Activated CD4-positive, alpha-beta T cell treated with anti-CD3 and anti-CD28 coated beads for 36 hours (primary cell): ENCODE measurements at regions of chr12 and their contacts with region 1.

Region 1: GRCh38 chr12:132144115-132144812 is at the starts of genes DDX51 and NOC4L:
- DNase-seq: peak; percentile 97
- ATAC-seq: peak; percentile 94
- H3K4me3 Mint-ChIP-seq: peak within 1 kb of the TSS; percentile 88
- H3K27ac Mint-ChIP-seq: peak within 1 kb of the TSS; percentile 86
- H3K4me1 Mint-ChIP-seq: peaks cover 32% of the 10 kb centered on the region
- H3K27me3 Mint-ChIP-seq: no peaks in the 10 kb centered on the region
- total RNA-seq, gene DDX51: 19.2 to 31.4 TPM
- total RNA-seq, gene NOC4L: 30.5 to 35.7 TPM

Region 2: GRCh38 chr12:131894313-131894860 is 249.9 kb before region 1 on chr12 and contains the start of gene ULK1:
- CTCF ChIA-PET with region 1: no interaction called
- POLR2A ChIA-PET with region 1: no interaction called
- intact Hi-C with region 1: loop called in 1 of 2 experiments (anchors 1 kb)
- DNase-seq: peak; percentile 96
- ATAC-seq: peak; percentile 86
- H3K4me3 Mint-ChIP-seq: peak within 1 kb of the TSS; percentile 78
- H3K27ac Mint-ChIP-seq: peak within 1 kb of the TSS; percentile 55
- H3K4me1 Mint-ChIP-seq: peaks cover 12% of the 10 kb centered on the region
- H3K27me3 Mint-ChIP-seq: no peaks in the 10 kb centered on the region
- total RNA-seq, gene ULK1: 12.9 to 14.4 TPM

Region 3: DNA sequence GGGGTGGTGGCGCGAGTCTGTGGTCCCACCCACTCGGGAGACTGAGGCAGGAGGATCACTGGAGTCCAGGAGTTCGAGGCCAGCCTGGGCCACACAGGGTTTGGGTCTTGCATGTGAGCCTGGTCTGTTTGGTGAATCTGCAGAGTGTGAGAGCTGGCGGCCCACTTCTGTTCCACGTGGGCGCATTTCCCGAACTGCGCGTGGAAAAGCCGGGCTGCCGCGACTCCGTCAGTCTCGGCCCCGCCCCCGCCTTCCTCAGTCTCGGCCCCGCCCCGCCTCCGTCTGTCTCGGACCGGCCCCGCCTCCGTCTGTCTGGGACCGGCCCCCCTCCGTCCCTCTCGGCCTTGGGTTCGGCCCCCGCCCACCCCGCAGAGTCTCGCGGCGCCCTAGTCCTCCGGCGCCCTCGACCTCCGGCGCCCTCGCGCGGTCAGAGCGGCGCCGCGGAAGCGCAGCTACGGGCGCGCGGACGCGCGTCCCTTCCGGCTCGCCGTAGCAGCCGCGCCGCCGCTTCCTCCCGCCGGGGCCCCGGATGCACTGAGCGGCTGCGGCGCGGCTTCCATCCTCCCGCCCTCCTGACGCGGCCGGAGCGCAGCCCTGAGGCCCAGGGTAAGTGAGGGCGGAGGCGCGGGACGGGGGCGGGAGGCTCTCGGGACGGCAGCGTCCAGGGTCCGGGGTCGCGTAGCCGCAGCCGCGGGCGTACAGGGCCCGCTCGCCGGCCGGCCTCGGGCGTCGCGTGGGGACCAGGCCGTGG is 194.7 kb before region 1 on chr12 and contains the start of gene EP400:
- CTCF ChIA-PET with region 1: no interaction called
- POLR2A ChIA-PET with region 1: no interaction called
- intact Hi-C with region 1: loop called in 1 of 2 experiments (anchors 1 kb)
- DNase-seq: peak; percentile 97
- ATAC-seq: peak; percentile 96
- H3K4me3 Mint-ChIP-seq: peak within 1 kb of the TSS; percentile 88
- H3K27ac Mint-ChIP-seq: peak within 1 kb of the TSS; percentile 93
- H3K4me1 Mint-ChIP-seq: peaks cover 42% of the 10 kb centered on the region
- H3K27me3 Mint-ChIP-seq: no peaks in the 10 kb centered on the region
- total RNA-seq, gene EP400: 46.4 to 51.3 TPM

Region 4: GRCh38 chr12:132071040-132071810 is 73.0 kb before region 1 on chr12:
- CTCF ChIA-PET with region 1: no interaction called
- POLR2A ChIA-PET with region 1: no interaction called
- intact Hi-C with region 1: no loop called
- DNase-seq: no peak
- ATAC-seq: no peak
- H3K4me3 Mint-ChIP-seq: no peak overlapping the region
- H3K27ac Mint-ChIP-seq: no peak overlapping the region
- H3K4me1 Mint-ChIP-seq: peaks cover 11% of the 10 kb centered on the region
- H3K27me3 Mint-ChIP-seq: no peaks in the 10 kb centered on the region

Region 5: GRCh38 chr12:132189378-132190011 is 45.2 kb after region 1 on chr12:
- CTCF ChIA-PET with region 1: interaction called, 4 read pairs
- POLR2A ChIA-PET with region 1: no interaction called
- intact Hi-C with region 1: loop called in 1 of 2 experiments (anchors 1 kb)
- DNase-seq: peak; percentile 97
- ATAC-seq: peak; percentile 95
- H3K4me3 Mint-ChIP-seq: peak overlapping the region; percentile 78
- H3K27ac Mint-ChIP-seq: peak overlapping the region; percentile 79
- H3K4me1 Mint-ChIP-seq: peaks cover 28% of the 10 kb centered on the region
- H3K27me3 Mint-ChIP-seq: no peaks in the 10 kb centered on the region

Region 6: GRCh38 chr12:132248453-132249167 is 104.3 kb after region 1 on chr12:
- CTCF ChIA-PET with region 1: no interaction called
- POLR2A ChIA-PET with region 1: no interaction called
- intact Hi-C with region 1: no loop called
- DNase-seq: no peak
- ATAC-seq: no peak
- H3K4me3 Mint-ChIP-seq: no peak overlapping the region
- H3K27ac Mint-ChIP-seq: no peak overlapping the region
- H3K4me1 Mint-ChIP-seq: peaks cover 4% of the 10 kb centered on the region
- H3K27me3 Mint-ChIP-seq: peaks cover 3% of the 10 kb centered on the region

Region 7: GRCh38 chr12:132327351-132328171 is 183.3 kb after region 1 on chr12:
- CTCF ChIA-PET with region 1: no interaction called
- POLR2A ChIA-PET with region 1: no interaction called
- intact Hi-C with region 1: no loop called
- DNase-seq: peak; percentile 89
- ATAC-seq: peak; percentile 86
- H3K4me3 Mint-ChIP-seq: peak overlapping the region; percentile 54
- H3K27ac Mint-ChIP-seq: peak overlapping the region; percentile 79
- H3K4me1 Mint-ChIP-seq: peaks cover 35% of the 10 kb centered on the region
- H3K27me3 Mint-ChIP-seq: peaks cover 39% of the 10 kb centered on the region

Region 8: DNA sequence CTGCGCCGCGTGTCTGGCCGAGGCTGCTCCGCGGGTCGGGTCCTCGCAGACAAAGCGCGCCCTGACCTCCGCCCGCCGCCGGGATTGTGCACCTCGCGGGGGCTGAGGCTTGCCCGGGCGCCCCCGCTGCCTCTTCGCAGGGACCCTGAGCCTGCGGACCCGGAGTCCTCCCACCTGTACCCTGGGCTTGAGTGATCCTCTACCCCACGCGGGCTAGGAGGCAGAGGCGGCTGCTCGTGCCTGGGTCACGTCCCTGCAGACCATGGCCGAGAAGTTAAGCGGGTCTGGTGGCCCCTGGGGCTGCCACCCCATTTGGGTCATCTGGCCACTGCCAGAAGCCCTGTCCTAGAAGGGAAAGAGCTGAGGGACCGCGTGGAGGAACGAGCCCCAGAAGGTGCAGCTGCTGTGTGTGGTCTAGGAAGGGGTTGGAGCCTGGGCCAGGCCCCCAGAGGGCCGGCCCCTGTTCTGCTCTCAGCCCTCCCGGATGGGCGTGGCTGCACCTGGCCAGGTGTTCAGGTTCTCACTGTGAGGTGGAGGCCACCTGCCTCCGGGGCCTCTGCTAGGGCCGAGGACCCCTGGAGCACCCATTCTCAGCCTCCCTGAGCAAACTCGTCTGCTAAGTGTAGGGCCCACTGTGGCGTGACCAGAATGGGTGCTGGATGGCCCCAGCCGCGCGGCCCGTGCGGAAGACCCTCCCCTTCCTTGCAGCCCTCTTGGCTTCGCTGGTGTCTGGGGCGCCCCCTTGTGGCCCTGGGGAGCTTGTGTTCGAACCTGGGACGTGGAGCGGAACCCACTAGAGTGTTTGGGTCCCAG is 416.6 kb after region 1 on chr12:
- CTCF ChIA-PET with region 1: no interaction called
- POLR2A ChIA-PET with region 1: no interaction called
- intact Hi-C with region 1: loop called in 1 of 2 experiments (anchors 2 kb)
- DNase-seq: peak; percentile 90
- ATAC-seq: peak; percentile 74
- H3K4me3 Mint-ChIP-seq: peak overlapping the region; percentile 73
- H3K27ac Mint-ChIP-seq: no peak overlapping the region
- H3K4me1 Mint-ChIP-seq: peaks cover 13% of the 10 kb centered on the region
- H3K27me3 Mint-ChIP-seq: peaks cover 7% of the 10 kb centered on the region